CD4-positive, alpha-beta T cell (primary cell): ENCODE measurements at regions of chr1 and their contacts with region 1.

Region 1: GRCh38 chr1:94922761-94923331 is 4.1 kb downstream of the CNN3 start:
- DNase-seq: no peak
- ATAC-seq: no peak
- H3K4me3 ChIP-seq: no peak overlapping the region
- H3K4me3 Mint-ChIP-seq: no peak overlapping the region
- H3K27ac ChIP-seq: no peak overlapping the region
- H3K27ac Mint-ChIP-seq: no peak overlapping the region
- H3K4me1 ChIP-seq: peaks cover 20% of the 10 kb centered on the region
- H3K4me1 Mint-ChIP-seq: peaks cover 16% of the 10 kb centered on the region
- H3K27me3 ChIP-seq: peaks cover 16 to 19% of the 10 kb centered on the region in 2 experiments
- H3K27me3 Mint-ChIP-seq: peaks cover 71% of the 10 kb centered on the region
- CTCF ChIP-seq: no peak

Region 2: DNA sequence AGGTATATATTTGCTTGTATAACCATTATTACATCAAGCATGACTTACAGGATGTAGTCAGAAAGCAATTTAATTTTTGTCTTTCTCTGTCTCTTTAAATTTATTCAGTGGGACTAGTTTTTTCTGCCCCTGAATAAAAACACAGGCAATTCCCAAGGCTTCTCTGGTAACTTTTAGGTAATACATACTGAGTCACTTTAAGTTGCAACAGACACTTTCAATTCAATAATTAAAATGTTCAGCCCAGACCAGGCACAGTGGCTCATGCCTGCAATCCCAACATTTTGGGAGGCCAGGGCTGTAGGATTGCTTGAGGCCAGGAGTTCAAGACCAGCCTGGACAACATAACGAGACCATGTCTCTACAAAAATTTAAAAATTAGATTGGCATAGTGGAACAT is 90.4 kb before region 1 on chr1:
- CTCF ChIA-PET with region 1: no interaction called
- POLR2A ChIA-PET with region 1: no interaction called
- intact Hi-C with region 1: no loop called
- DNase-seq: no peak
- ATAC-seq: no peak
- H3K4me3 ChIP-seq: no peak overlapping the region
- H3K4me3 Mint-ChIP-seq: no peak overlapping the region
- H3K27ac ChIP-seq: no peak overlapping the region
- H3K27ac Mint-ChIP-seq: no peak overlapping the region
- H3K4me1 ChIP-seq: no peaks in the 10 kb centered on the region
- H3K4me1 Mint-ChIP-seq: no peaks in the 10 kb centered on the region
- H3K27me3 ChIP-seq: peaks cover 0 to 12% of the 10 kb centered on the region in 2 experiments
- H3K27me3 Mint-ChIP-seq: peaks cover 54% of the 10 kb centered on the region
- CTCF ChIP-seq: no peak

Region 3: DNA sequence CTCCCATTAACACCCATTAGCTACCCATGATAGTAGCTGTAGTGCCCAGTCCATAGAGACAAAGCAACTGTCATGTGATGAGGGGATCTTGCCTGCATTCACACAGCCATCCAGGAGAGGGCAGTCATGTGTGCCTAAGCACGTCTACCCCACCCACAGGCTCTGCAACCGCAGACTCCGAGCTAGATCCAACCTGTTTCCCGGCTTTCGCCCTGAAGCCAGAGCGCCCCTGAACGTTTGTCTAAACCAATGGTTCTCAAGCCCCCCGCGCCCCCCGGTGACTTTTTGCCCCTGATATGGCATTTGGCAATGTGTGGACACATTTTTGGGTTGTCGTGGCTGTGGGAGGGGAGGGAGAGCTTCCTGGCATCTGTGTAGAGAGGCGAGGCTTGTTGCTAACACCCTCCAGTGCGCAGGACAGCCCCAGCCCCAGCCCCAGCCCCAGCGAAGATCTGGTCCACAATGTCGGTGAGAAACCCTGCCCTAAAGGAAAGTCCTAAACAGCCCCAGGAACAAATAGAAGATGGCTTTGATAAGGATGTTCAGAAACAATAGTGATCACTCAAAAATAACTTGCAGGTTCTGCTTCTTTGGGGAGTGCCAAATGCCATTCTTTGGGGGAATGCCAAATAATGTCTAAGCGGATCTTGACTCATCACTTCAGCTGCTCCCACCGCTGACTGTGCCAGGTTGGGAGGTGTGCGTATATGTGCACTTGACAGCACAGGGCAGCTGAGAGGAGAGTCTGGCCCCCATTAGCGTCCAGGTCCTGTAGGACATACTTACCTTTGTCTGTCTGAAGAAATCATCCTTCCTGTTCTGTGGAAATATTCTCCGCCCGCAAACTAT is 68.2 kb before region 1 on chr1:
- CTCF ChIA-PET with region 1: no interaction called
- POLR2A ChIA-PET with region 1: no interaction called
- intact Hi-C with region 1: loop called in 1 of 2 experiments (anchors 5 kb)
- DNase-seq: peak; percentile 58 to 89 (median 66)
- ATAC-seq: peak; percentile 98
- H3K4me3 ChIP-seq: peak overlapping the region; percentile 53
- H3K4me3 Mint-ChIP-seq: no peak overlapping the region
- H3K27ac ChIP-seq: no peak overlapping the region
- H3K27ac Mint-ChIP-seq: no peak overlapping the region
- H3K4me1 ChIP-seq: peaks cover 9% of the 10 kb centered on the region
- H3K4me1 Mint-ChIP-seq: no peaks in the 10 kb centered on the region
- H3K27me3 ChIP-seq: peaks cover 0 to 4% of the 10 kb centered on the region in 2 experiments
- H3K27me3 Mint-ChIP-seq: peaks cover 3% of the 10 kb centered on the region
- CTCF ChIP-seq: peak; percentile 80